WTC11 (cell line): ENCODE measurements at regions of chr16 and their contacts with region 1.

Region 1: DNA sequence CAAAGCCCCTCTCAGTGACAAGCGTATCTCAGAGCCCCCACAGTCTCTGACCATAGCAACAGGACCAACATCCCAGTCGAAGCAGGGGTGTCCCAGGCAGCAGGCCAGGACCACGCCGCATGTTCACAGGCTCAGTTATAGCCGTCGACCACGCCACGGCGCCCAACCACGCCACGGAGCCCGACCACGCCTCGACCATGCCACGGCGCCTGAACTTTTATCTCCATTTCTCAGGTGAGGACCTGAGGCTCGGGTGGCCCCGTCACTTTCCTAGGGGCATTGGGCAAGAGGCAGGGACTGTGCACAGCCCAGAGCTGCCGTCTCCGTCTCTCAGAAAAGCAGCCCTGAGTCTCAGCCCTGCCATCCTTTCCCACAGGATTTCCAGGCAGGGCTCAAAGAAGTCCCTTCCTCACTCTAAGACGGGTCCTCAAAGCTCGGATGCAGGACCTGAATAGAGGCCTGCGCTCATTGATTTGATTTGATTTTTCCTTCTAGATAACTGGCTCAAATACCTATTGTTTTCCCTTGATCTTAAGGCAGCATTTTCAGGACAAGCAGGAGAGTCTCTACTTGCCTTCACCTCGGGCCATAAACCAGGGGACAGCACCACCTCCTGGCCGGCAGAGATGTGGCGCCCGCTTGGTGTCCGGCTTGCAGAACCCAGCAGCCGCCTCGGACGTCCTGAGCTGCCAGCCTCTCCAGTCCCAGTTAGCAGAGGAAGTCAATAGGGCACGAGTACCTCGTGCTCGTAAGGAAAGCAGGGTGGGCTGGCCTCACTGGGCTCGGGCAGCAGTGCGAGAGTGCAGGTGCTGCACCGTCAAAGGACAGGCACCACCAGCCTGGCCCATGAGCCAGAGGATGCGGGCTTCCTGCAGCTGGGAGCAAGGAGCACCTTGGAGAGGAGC is 38.7 kb downstream of the C16orf95 start:
- DNase-seq: peak; percentile 90
- ATAC-seq: peak; percentile 95
- H3K4me3 Mint-ChIP-seq: peak overlapping the region; percentile 28; the same call in 1 of the 2 replicates
- H3K27ac Mint-ChIP-seq: no peak overlapping the region
- H3K4me1 Mint-ChIP-seq: peaks cover 3% of the 10 kb centered on the region; the same call in 1 of the 2 replicates
- H3K27me3 Mint-ChIP-seq: no peaks in the 10 kb centered on the region; the same call in 1 of the 2 replicates
- CTCF ChIP-seq: peak; percentile 77

Region 2: DNA sequence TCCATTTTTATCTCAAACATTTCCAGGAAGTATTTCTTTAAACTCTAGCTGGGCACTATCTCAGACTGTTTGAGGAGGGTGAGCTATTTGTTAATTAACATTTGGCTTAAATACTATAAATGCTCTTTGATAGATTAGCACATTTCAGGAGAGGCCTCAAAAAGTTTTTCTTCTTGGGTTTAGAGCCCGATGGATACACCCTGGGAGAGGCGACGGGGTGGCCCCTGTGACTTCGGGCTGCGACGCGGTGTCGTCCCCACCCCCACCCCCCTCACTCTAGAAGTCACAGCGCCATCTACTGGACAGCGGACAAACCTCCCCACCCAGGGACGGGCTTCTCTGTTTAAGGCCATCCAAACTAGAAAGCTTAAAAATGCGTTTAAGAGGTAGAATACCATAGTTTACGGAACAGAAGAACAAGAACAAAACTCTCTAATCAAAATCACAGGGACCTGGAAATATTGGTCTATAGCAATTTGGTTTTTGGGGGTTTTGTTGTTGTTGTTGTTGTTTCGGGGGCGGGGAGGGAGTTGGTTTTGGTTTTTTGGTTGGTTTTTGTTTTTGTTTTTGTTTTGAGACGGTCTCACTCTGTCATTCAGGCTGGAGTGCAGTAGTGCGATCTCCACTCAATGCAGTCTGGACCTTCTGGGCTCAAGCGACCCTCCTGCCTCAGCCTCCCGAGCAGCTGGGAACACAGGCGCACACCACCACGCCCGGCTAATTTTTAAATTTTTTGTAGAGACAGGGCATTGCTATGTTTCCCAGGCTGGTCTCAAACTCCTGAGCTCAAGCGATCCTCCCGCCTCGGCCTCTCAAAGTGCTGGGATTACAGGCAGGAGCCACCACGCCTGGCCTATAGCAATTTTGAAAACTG is 215.6 kb before region 1 on chr16:
- CTCF ChIA-PET with region 1: interaction called, 13 read pairs
- POLR2A ChIA-PET with region 1: no interaction called
- DNase-seq: peak; percentile 82
- ATAC-seq: peak; percentile 81
- H3K4me3 Mint-ChIP-seq: peak overlapping the region; percentile 20
- H3K27ac Mint-ChIP-seq: no peak overlapping the region
- H3K4me1 Mint-ChIP-seq: peaks cover 31% of the 10 kb centered on the region
- H3K27me3 Mint-ChIP-seq: no peaks in the 10 kb centered on the region
- CTCF ChIP-seq: peak; percentile 76

Region 3: GRCh38 chr16:87203060-87203656 is 75.3 kb before region 1 on chr16:
- CTCF ChIA-PET with region 1: interaction called, 39 read pairs
- POLR2A ChIA-PET with region 1: interaction called, 4 read pairs
- DNase-seq: peak; percentile 86
- ATAC-seq: peak; percentile 90
- H3K4me3 Mint-ChIP-seq: no peak overlapping the region
- H3K27ac Mint-ChIP-seq: peak overlapping the region; percentile 18; the same call in 1 of the 2 replicates
- H3K4me1 Mint-ChIP-seq: peaks cover 24% of the 10 kb centered on the region
- H3K27me3 Mint-ChIP-seq: no peaks in the 10 kb centered on the region; the same call in 1 of the 2 replicates
- CTCF ChIP-seq: peak; percentile 72

Region 4: GRCh38 chr16:87246269-87247065 is 32.0 kb before region 1 on chr16:
- CTCF ChIA-PET with region 1: interaction called, 21 read pairs
- POLR2A ChIA-PET with region 1: no interaction called
- DNase-seq: no peak
- ATAC-seq: no peak
- H3K4me3 Mint-ChIP-seq: no peak overlapping the region
- H3K27ac Mint-ChIP-seq: no peak overlapping the region
- H3K4me1 Mint-ChIP-seq: peaks cover 30% of the 10 kb centered on the region
- H3K27me3 Mint-ChIP-seq: no peaks in the 10 kb centered on the region
- CTCF ChIP-seq: no peak

Region 5: DNA sequence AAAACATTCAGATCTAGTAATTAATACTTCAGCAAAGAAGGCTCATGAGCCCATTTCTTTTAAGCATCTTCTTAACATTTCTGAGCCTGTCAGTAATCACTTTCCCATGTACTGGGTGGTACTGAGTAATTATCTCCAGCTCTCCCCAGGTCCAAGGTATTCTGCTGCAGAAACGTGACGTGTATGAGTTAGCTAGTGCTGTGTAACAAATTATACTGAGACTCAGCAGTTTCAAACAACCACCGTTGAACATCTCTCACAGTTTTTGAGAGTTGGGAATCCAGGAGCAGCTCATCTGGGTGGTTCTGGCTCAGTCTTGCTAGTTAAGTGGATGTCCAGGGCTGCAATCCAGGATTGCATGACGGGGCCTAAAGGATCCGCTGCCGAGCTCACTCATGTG is 13.5 kb after region 1 on chr16:
- CTCF ChIA-PET with region 1: interaction called, 31 read pairs
- POLR2A ChIA-PET with region 1: no interaction called
- DNase-seq: no peak
- ATAC-seq: no peak
- H3K4me3 Mint-ChIP-seq: no peak overlapping the region
- H3K27ac Mint-ChIP-seq: no peak overlapping the region
- H3K4me1 Mint-ChIP-seq: no peaks in the 10 kb centered on the region
- H3K27me3 Mint-ChIP-seq: peaks cover 2% of the 10 kb centered on the region; the same call in 1 of the 2 replicates
- CTCF ChIP-seq: no peak

Region 6: GRCh38 chr16:87305505-87306391 is 27.3 kb after region 1 on chr16:
- CTCF ChIA-PET with region 1: no interaction called
- POLR2A ChIA-PET with region 1: no interaction called
- DNase-seq: peak; percentile 49
- ATAC-seq: peak; percentile 91
- H3K4me3 Mint-ChIP-seq: no peak overlapping the region
- H3K27ac Mint-ChIP-seq: no peak overlapping the region
- H3K4me1 Mint-ChIP-seq: peaks cover 16% of the 10 kb centered on the region
- H3K27me3 Mint-ChIP-seq: peaks cover 5% of the 10 kb centered on the region
- CTCF ChIP-seq: no peak